Activated CD8-positive, alpha-beta T cell treated with anti-CD3 and anti-CD28 coated beads for 36 hours (primary cell): ENCODE measurements at regions of chrX and their contacts with region 1.

Region 1: GRCh38 chrX:19904778-19905367 is 17.5 kb upstream of the SH3KBP1 start:
- DNase-seq: peak; percentile 38
- ATAC-seq: peak; percentile 87
- H3K4me3 Mint-ChIP-seq: no peak overlapping the region
- H3K27ac Mint-ChIP-seq: no peak overlapping the region
- H3K4me1 Mint-ChIP-seq: peaks cover 12% of the 10 kb centered on the region
- H3K27me3 Mint-ChIP-seq: no peaks in the 10 kb centered on the region
- CTCF ChIP-seq: peak; percentile 65

Region 2: DNA sequence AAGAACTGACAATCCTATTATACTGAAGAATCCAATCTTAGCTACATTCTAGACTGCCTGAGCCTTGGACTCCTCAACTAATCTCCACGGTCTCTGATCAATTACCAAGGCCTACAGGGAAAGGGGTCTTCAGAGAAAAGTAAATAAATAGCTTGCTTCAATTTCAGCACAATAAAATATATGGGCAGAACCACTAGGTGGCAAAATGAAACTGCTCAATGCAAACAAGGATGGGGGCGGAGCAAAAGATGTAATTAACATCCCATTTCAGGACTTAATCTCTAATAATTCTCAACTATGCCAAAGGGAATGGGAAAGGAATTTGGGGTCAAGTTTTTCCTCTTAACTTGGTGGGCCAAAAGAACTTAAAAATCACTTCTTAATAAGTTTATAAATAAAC is 311.2 kb before region 1 on chrX:
- CTCF ChIA-PET with region 1: interaction called, 10 read pairs
- POLR2A ChIA-PET with region 1: no interaction called
- intact Hi-C with region 1: no loop called
- DNase-seq: peak; percentile 36
- ATAC-seq: peak; percentile 45
- H3K4me3 Mint-ChIP-seq: no peak overlapping the region
- H3K27ac Mint-ChIP-seq: peak overlapping the region; percentile 16
- H3K4me1 Mint-ChIP-seq: peaks cover 13% of the 10 kb centered on the region
- H3K27me3 Mint-ChIP-seq: no peaks in the 10 kb centered on the region
- CTCF ChIP-seq: peak; percentile 61

Region 3: GRCh38 chrX:19915754-19916153 is 10.9 kb after region 1 on chrX:
- CTCF ChIA-PET with region 1: no interaction called
- POLR2A ChIA-PET with region 1: no interaction called
- intact Hi-C with region 1: no loop called
- DNase-seq: no peak
- ATAC-seq: no peak
- H3K4me3 Mint-ChIP-seq: no peak overlapping the region
- H3K27ac Mint-ChIP-seq: no peak overlapping the region
- H3K4me1 Mint-ChIP-seq: peaks cover 11% of the 10 kb centered on the region
- H3K27me3 Mint-ChIP-seq: no peaks in the 10 kb centered on the region
- CTCF ChIP-seq: no peak

Region 4: GRCh38 chrX:19990556-19991349 is 85.9 kb after region 1 on chrX and contains the start of gene BCLAF3:
- CTCF ChIA-PET with region 1: interaction called, 35 read pairs
- POLR2A ChIA-PET with region 1: no interaction called
- intact Hi-C with region 1: loop called (anchors 5 kb)
- DNase-seq: peak; percentile 89
- ATAC-seq: peak; percentile 95
- H3K4me3 Mint-ChIP-seq: peak within 1 kb of the TSS; percentile 88
- H3K27ac Mint-ChIP-seq: peak within 1 kb of the TSS; percentile 90
- H3K4me1 Mint-ChIP-seq: peaks cover 7% of the 10 kb centered on the region
- H3K27me3 Mint-ChIP-seq: no peaks in the 10 kb centered on the region
- CTCF ChIP-seq: peak; percentile 67
- total RNA-seq, gene BCLAF3: 2.9 to 3.2 TPM

Region 5: GRCh38 chrX:20060961-20061748 is 156.3 kb after region 1 on chrX:
- CTCF ChIA-PET with region 1: interaction called, 26 read pairs
- POLR2A ChIA-PET with region 1: no interaction called
- intact Hi-C with region 1: loop called (anchors 10 kb)
- DNase-seq: no peak
- ATAC-seq: peak; percentile 30
- H3K4me3 Mint-ChIP-seq: no peak overlapping the region
- H3K27ac Mint-ChIP-seq: no peak overlapping the region
- H3K4me1 Mint-ChIP-seq: peaks cover 10% of the 10 kb centered on the region
- H3K27me3 Mint-ChIP-seq: no peaks in the 10 kb centered on the region
- CTCF ChIP-seq: no peak

Region 6: DNA sequence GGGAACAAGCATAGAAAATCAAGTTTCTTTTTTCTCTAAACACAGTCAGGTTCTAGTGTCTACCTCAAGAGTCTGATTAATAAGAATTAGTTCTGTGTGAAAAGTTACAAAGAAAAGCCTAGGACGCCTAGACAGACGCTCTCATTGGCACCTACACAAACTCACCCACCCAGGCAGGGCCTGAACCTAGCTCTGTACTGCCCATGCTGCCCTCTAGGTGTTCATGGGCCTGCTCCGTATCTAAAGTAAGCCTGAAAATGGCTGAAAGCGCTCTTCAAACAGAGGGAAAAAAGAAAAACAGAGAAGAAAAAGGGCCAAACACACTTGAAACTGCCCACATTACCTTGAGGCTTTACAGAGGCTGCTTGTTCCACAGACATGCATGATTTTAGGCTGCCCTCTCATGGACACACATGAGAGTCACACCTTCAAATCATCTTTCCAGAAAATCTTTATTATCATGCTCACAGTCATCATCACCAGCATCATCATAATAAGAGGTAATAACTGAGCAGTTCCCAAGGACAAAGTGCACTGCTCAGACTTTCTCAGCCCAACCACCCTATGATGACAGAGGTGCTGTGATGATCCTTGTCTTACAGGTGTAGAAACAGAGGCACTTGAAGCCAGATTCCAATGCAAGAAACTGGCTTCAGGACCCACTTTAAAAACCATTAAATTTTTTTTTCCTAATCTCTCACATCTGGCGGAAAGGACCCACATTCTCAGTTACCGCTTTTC is 162.3 kb after region 1 on chrX:
- CTCF ChIA-PET with region 1: interaction called, 26 read pairs
- POLR2A ChIA-PET with region 1: no interaction called
- intact Hi-C with region 1: loop called (anchors 10 kb)
- DNase-seq: peak; percentile 23
- ATAC-seq: peak; percentile 78
- H3K4me3 Mint-ChIP-seq: no peak overlapping the region
- H3K27ac Mint-ChIP-seq: no peak overlapping the region
- H3K4me1 Mint-ChIP-seq: no peaks in the 10 kb centered on the region
- H3K27me3 Mint-ChIP-seq: no peaks in the 10 kb centered on the region
- CTCF ChIP-seq: peak; percentile 51

Region 7: GRCh38 chrX:20141281-20142220 is 236.7 kb after region 1 on chrX and contains the start of gene EIF1AX:
- CTCF ChIA-PET with region 1: no interaction called
- POLR2A ChIA-PET with region 1: no interaction called
- intact Hi-C with region 1: no loop called
- DNase-seq: peak; percentile 97
- ATAC-seq: peak; percentile 99
- H3K4me3 Mint-ChIP-seq: peak within 1 kb of the TSS; percentile 81
- H3K27ac Mint-ChIP-seq: peak within 1 kb of the TSS; percentile 90
- H3K4me1 Mint-ChIP-seq: peaks cover 36% of the 10 kb centered on the region
- H3K27me3 Mint-ChIP-seq: no peaks in the 10 kb centered on the region
- CTCF ChIP-seq: no peak
- total RNA-seq, gene EIF1AX: 138 to 147 TPM